ENCODE measurements at regions of chr5 and their contacts with region 1.

Region 1: DNA sequence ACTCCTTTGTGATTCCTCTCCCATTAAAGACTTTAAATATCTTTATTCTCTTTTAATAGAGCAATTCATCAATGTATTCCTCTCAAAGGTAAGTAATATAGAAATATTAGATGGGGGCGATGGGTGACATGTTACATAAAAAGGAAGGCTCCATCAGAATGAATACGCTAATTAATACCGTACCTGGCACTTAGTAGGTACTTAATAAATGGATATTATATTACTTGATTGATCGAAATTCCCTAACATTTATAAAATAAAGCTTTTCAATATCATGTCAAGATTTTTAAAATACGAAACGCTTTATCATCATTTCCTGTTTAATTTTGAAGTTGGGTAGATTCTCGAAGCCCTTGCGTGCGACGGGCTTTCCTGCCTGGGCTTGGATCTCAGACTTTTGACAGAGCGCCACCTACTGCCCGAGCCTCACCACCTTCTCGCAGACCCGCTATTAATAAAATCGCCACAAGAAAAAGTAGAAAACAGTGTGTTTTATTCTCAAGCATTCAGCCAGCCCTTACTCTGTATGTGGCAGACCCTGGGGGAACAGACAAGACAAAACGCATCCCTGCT is 99.4 kb downstream of the C5orf15 start:
- DNase-seq: peak; percentile 38
- ATAC-seq: peak; percentile 81
- H3K4me3 ChIP-seq: peak overlapping the region in 1 of 2 experiments; percentile 25; a peak in 2 of 4 replicates
- H3K27ac ChIP-seq: no peak overlapping the region
- H3K4me1 ChIP-seq: peaks cover 6% of the 10 kb centered on the region; the same call in 1 of the 2 replicates
- H3K27me3 ChIP-seq: peaks cover 4% of the 10 kb centered on the region; the same call in 1 of the 2 replicates
- CTCF ChIP-seq: peak; percentile 93

Region 2: GRCh38 chr5:133790898-133791297 is 78.1 kb before region 1 on chr5:
- CTCF ChIA-PET with region 1: no interaction called
- POLR2A ChIA-PET with region 1: interaction called, 10 read pairs
- in situ Hi-C with region 1: no loop called
- intact Hi-C with region 1: no loop called
- DNase-seq: no peak
- ATAC-seq: no peak
- H3K4me3 ChIP-seq: no peak overlapping the region
- H3K27ac ChIP-seq: no peak overlapping the region
- H3K4me1 ChIP-seq: no peaks in the 10 kb centered on the region
- H3K27me3 ChIP-seq: peaks cover 8% of the 10 kb centered on the region; the same call in 1 of the 2 replicates
- CTCF ChIP-seq: no peak